Sigmoid colon (tissue), 7 donors: ENCODE measurements at regions of chr17 and their contacts with region 1.

Region 1: GRCh38 chr17:7931709-7932482 is at the starts of genes CNTROB and TRAPPC1:
- DNase-seq: peak; percentile 100
- H3K4me3 ChIP-seq: peak within 1 kb of the TSS; percentile 67 to 74 (median 72)
- H3K27ac ChIP-seq: peak within 1 kb of the TSS; percentile 83 to 87 (median 84)
- H3K4me1 ChIP-seq: peaks cover 0 to 61% (median 42%) of the 10 kb centered on the region in 4 donors
- H3K27me3 ChIP-seq: peaks cover 0 to 20% (median 9%) of the 10 kb centered on the region in 3 donors
- CTCF ChIP-seq: no peak
- EP300 ChIP-seq: no peak
- POLR2A ChIP-seq: peak; percentile 76 to 79
- total RNA-seq, gene CNTROB: 11.8 to 40.4 (median 30.0) TPM
- total RNA-seq, gene TRAPPC1: 33.5 to 66.5 (median 45.7) TPM

Region 2: DNA sequence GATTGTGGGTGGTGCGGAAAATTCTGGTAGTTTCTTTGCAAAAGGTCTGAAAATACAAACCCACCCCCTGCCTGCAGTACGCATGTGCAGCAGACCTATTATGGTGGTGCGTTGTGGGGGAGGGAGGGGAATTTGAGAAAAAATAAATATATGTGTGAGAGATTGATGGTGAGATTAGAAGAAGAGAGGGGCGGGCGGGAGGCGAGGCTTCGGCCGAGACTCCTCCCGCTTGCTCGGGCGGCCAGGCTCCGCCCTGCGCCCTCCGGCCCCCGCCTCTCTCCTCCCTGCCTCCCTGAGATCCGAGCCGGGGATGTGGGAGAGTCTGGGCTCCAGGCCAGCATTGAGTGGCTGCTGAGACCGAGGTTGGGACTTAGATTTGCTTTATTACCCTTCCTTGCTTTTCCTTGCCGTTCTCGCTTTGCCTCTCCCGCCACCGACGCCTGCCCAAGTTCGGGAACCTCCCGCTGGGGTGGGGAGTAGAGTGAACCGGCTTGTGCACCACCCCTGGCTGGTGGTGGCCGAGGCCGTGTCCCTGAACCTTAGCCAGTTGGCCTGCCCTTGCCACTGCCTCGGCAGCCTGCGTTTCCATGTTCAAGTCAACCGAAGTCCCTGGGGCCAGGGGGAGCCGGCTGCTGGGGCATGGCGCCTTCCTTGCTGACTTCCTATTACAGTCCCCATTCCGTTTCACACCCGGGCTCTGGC is 44.3 kb before region 1 on chr17:
- intact Hi-C with region 1: loop called (anchors 2 kb)
- DNase-seq: peak; percentile 98
- H3K4me3 ChIP-seq: peak overlapping the region in 3 of 4 donors; percentile 89 to 94 (median 89)
- H3K27ac ChIP-seq: peak overlapping the region; percentile 93 to 98 (median 95)
- H3K4me1 ChIP-seq: peaks cover 0 to 69% (median 56%) of the 10 kb centered on the region in 4 donors
- H3K27me3 ChIP-seq: no peaks in the 10 kb centered on the region
- CTCF ChIP-seq: no peak
- EP300 ChIP-seq: no peak
- POLR2A ChIP-seq: peak in 1 of 2 donors; percentile 51